ENCODE measurements at regions of chr17 and their contacts with region 1.

Region 1: DNA sequence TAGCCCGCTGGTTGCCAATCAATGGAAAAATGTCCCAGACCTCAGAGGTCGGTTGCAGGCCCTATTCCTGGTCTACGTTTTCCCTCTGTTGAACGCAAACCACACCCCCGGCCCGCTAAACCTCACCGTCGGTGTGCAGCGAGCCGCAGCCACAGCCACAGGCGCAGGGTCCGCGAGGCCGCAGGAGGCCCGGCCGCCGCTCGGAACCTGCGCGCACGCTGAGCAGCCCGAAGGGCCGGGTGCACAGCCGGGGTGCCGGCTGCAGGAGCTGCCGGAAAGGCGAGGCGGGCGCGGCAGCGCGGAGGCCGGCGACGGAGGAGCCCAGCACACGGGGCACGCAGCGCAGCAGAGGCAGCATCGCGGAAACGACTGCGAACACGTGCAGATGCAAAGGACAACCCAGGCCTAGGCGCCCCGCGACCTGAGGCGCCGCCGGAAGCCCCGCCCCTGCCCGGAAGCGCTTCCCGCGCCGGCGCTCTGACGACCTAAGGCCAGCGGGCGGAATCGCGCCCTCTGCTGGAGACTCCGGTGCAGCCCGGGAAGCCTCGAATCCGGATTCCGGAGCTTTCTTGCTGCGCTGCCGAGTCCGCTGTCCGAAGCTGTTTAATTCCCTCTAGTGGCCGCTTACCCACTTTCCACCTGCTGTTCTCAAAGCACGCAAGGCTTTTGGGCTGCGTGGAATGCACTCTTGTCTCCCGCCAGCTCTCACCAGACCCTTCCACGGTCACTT is at the start of gene C1QBP:
- DNase-seq: peak; percentile 78 to 97 (median 87)
- ATAC-seq: peak; percentile 89 to 97 (median 91)
- H3K4me3 ChIP-seq: peak within 1 kb of the TSS; percentile 69 to 82
- H3K4me3 Mint-ChIP-seq: peak within 1 kb of the TSS; percentile 73 to 84 (median 79)
- H3K27ac ChIP-seq: peak within 1 kb of the TSS; percentile 84
- H3K27ac Mint-ChIP-seq: peak within 1 kb of the TSS; percentile 96
- H3K4me1 ChIP-seq: peaks cover 7 to 22% of the 10 kb centered on the region in 2 experiments
- H3K4me1 Mint-ChIP-seq: peaks cover 33 to 41% (median 40%) of the 10 kb centered on the region in 3 donors
- H3K27me3 ChIP-seq: no peaks in the 10 kb centered on the region
- H3K27me3 Mint-ChIP-seq: no peaks in the 10 kb centered on the region
- total RNA-seq, gene C1QBP: 60.1 to 102 (median 93.5) TPM

Region 2: GRCh38 chr17:5191541-5192417 is 247.1 kb before region 1 on chr17 and contains the start of gene ZNF594:
- CTCF ChIA-PET with region 1: interaction called in 1 of 2 experiments, 16 read pairs
- POLR2A ChIA-PET with region 1: no interaction called
- DNase-seq: peak; percentile 91 to 99 (median 96)
- ATAC-seq: peak; percentile 99 to 100 (median 99)
- H3K4me3 ChIP-seq: peak within 1 kb of the TSS; percentile 78 to 81
- H3K4me3 Mint-ChIP-seq: peak within 1 kb of the TSS; percentile 92 to 93 (median 92)
- H3K27ac ChIP-seq: peak within 1 kb of the TSS; percentile 67
- H3K27ac Mint-ChIP-seq: peak within 1 kb of the TSS; percentile 85 to 88
- H3K4me1 ChIP-seq: peaks cover 6 to 21% of the 10 kb centered on the region in 2 experiments
- H3K4me1 Mint-ChIP-seq: peaks cover 31 to 34% (median 32%) of the 10 kb centered on the region in 3 donors
- H3K27me3 ChIP-seq: no peaks in the 10 kb centered on the region
- H3K27me3 Mint-ChIP-seq: no peaks in the 10 kb centered on the region
- total RNA-seq, gene ZNF594: 5.5 to 23.4 (median 20.9) TPM

Region 3: GRCh38 chr17:5419356-5419958 is 19.4 kb before region 1 on chr17 and contains the start of gene NUP88:
- CTCF ChIA-PET with region 1: interaction called in 1 of 2 experiments, 18 read pairs
- POLR2A ChIA-PET with region 1: interaction called in 1 of 2 experiments, 4 read pairs
- DNase-seq: peak in 34 of 35 experiments; percentile 85 to 98 (median 94)
- ATAC-seq: peak; percentile 87 to 95 (median 93)
- H3K4me3 ChIP-seq: peak within 1 kb of the TSS; percentile 76 to 98
- H3K4me3 Mint-ChIP-seq: peak within 1 kb of the TSS; percentile 96 to 100 (median 99)
- H3K27ac ChIP-seq: peak within 1 kb of the TSS; percentile 98
- H3K27ac Mint-ChIP-seq: peak within 1 kb of the TSS; percentile 98
- H3K4me1 ChIP-seq: peaks cover 14 to 33% of the 10 kb centered on the region in 2 experiments
- H3K4me1 Mint-ChIP-seq: peaks cover 27 to 54% (median 52%) of the 10 kb centered on the region in 3 donors
- H3K27me3 ChIP-seq: no peaks in the 10 kb centered on the region
- H3K27me3 Mint-ChIP-seq: no peaks in the 10 kb centered on the region
- total RNA-seq, gene NUP88: 88.2 to 124 (median 99.7) TPM

Region 4: DNA sequence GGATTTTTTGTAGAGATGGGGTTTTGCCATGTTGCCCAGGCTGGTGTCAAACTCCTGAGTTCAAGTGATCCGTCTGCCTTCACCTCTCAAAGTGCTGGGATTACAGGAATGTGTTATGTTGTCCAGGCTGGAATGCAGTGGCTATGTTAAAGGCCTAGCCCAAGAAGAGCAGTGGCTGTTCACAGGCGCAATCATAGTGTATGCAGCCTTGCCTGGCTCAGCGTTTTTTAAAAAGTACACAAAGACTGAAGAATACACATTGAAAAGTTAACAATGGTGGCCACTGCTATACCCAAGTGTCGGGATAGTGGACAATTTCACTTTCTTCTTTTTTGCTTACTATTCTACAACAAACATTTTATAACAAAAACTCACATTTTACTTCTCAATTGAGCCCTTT is 40.1 kb after region 1 on chr17:
- CTCF ChIA-PET with region 1: no interaction called
- POLR2A ChIA-PET with region 1: no interaction called
- DNase-seq: no peak
- ATAC-seq: no peak
- H3K4me3 ChIP-seq: no peak overlapping the region
- H3K4me3 Mint-ChIP-seq: no peak overlapping the region
- H3K27ac ChIP-seq: no peak overlapping the region
- H3K27ac Mint-ChIP-seq: no peak overlapping the region
- H3K4me1 ChIP-seq: peaks cover 0 to under 1% of the 10 kb centered on the region in 2 experiments
- H3K4me1 Mint-ChIP-seq: peaks cover 46 to 51% (median 47%) of the 10 kb centered on the region in 3 donors
- H3K27me3 ChIP-seq: no peaks in the 10 kb centered on the region
- H3K27me3 Mint-ChIP-seq: no peaks in the 10 kb centered on the region